ENCODE measurements at regions of chr13 and their contacts with region 1.

Region 1: DNA sequence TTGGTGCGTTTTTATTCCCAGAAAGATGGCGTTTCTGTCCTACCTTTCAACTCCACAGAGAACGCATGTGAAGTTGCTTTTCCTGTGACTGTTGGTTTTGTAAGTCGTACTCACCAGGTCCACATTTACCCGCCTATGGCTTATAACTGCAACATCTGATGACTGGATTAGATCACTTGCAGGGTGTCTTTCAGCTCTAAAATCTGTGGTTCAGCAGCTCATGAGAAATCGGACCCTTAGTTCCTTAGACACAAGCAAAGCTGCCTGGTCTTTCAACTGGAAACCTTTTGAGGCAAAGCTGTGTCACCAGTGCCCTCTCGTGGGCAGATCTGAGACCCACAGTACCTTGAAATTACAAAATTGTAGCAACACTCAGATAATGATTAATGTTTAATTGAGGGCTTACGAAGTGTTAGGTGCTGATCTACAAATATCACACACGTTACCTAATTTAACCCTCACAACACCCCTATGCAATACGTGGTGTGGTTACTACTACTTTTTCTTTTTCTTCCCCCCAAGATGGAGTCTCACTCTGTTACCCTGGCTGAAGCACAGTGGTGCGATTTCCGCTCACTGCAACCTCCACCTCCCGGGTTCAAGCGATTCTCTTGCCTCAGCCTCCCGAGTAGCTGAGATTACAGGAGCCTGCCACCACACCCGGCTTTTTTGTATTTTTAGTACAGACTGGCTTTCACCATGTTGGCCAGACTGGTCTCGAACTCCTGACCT is 65.4 kb downstream of the RUBCNL start:
- DNase-seq: peak; percentile 55 to 88 (median 76)
- ATAC-seq: peak; percentile 89
- H3K4me3 ChIP-seq: peak overlapping the region; percentile 6 to 35
- H3K4me3 Mint-ChIP-seq: peak overlapping the region; percentile 73
- H3K27ac ChIP-seq: peak overlapping the region; percentile 46 to 66
- H3K27ac Mint-ChIP-seq: peak overlapping the region; percentile 93
- H3K4me1 ChIP-seq: peaks cover 14% of the 10 kb centered on the region
- H3K4me1 Mint-ChIP-seq: peaks cover 44% of the 10 kb centered on the region
- H3K27me3 ChIP-seq: no peaks in the 10 kb centered on the region
- H3K27me3 Mint-ChIP-seq: no peaks in the 10 kb centered on the region
- CTCF ChIP-seq: peak; percentile 92

Region 2: GRCh38 chr13:45851171-45851921 is 470.3 kb before region 1 on chr13 and contains the start of gene SIAH3:
- CTCF ChIA-PET with region 1: interaction called, 3 read pairs
- POLR2A ChIA-PET with region 1: no interaction called
- intact Hi-C with region 1: loop called in 1 of 2 experiments (anchors 2 kb)
- DNase-seq: peak in 6 of 9 experiments; percentile 12 to 58 (median 26)
- ATAC-seq: peak; percentile 19
- H3K4me3 ChIP-seq: peak within 1 kb of the TSS; percentile 40 to 72
- H3K4me3 Mint-ChIP-seq: peak within 1 kb of the TSS; percentile 89
- H3K27ac ChIP-seq: peak within 1 kb of the TSS in 1 of 2 experiments; percentile 1
- H3K27ac Mint-ChIP-seq: peak within 1 kb of the TSS; percentile 84
- H3K4me1 ChIP-seq: peaks cover 51% of the 10 kb centered on the region
- H3K4me1 Mint-ChIP-seq: peaks cover 56% of the 10 kb centered on the region
- H3K27me3 ChIP-seq: peaks cover 0 to 2% of the 10 kb centered on the region in 2 experiments
- H3K27me3 Mint-ChIP-seq: no peaks in the 10 kb centered on the region
- CTCF ChIP-seq: no peak
- total RNA-seq, gene SIAH3: 0.49 to 0.61 TPM

Region 3: GRCh38 chr13:46146899-46147298 is 174.8 kb before region 1 on chr13:
- CTCF ChIA-PET with region 1: interaction called, 10 read pairs
- POLR2A ChIA-PET with region 1: no interaction called
- intact Hi-C with region 1: no loop called
- DNase-seq: no peak
- ATAC-seq: no peak
- H3K4me3 ChIP-seq: no peak overlapping the region
- H3K4me3 Mint-ChIP-seq: no peak overlapping the region
- H3K27ac ChIP-seq: no peak overlapping the region
- H3K27ac Mint-ChIP-seq: no peak overlapping the region
- H3K4me1 ChIP-seq: peaks cover 7% of the 10 kb centered on the region
- H3K4me1 Mint-ChIP-seq: peaks cover 29% of the 10 kb centered on the region
- H3K27me3 ChIP-seq: no peaks in the 10 kb centered on the region
- H3K27me3 Mint-ChIP-seq: no peaks in the 10 kb centered on the region
- CTCF ChIP-seq: no peak

Region 4: GRCh38 chr13:46184277-46184699 is 137.4 kb before region 1 on chr13:
- CTCF ChIA-PET with region 1: interaction called, 15 read pairs
- POLR2A ChIA-PET with region 1: no interaction called
- intact Hi-C with region 1: loop called in 1 of 2 experiments (anchors 1 kb)
- DNase-seq: peak; percentile 57 to 89 (median 77)
- ATAC-seq: peak; percentile 57
- H3K4me3 ChIP-seq: peak overlapping the region; percentile 31 to 32
- H3K4me3 Mint-ChIP-seq: peak overlapping the region; percentile 96
- H3K27ac ChIP-seq: peak overlapping the region; percentile 23 to 94
- H3K27ac Mint-ChIP-seq: peak overlapping the region; percentile 95
- H3K4me1 ChIP-seq: peaks cover 30% of the 10 kb centered on the region
- H3K4me1 Mint-ChIP-seq: peaks cover 37% of the 10 kb centered on the region
- H3K27me3 ChIP-seq: no peaks in the 10 kb centered on the region
- H3K27me3 Mint-ChIP-seq: no peaks in the 10 kb centered on the region
- CTCF ChIP-seq: peak; percentile 74

Region 5: GRCh38 chr13:46288570-46289259 is 32.9 kb before region 1 on chr13:
- CTCF ChIA-PET with region 1: interaction called, 97 read pairs
- POLR2A ChIA-PET with region 1: no interaction called
- intact Hi-C with region 1: loop called in 1 of 2 experiments (anchors 2 kb)
- DNase-seq: peak in 2 of 9 experiments; percentile 70 to 79
- ATAC-seq: peak; percentile 96
- H3K4me3 ChIP-seq: no peak overlapping the region
- H3K4me3 Mint-ChIP-seq: no peak overlapping the region
- H3K27ac ChIP-seq: no peak overlapping the region
- H3K27ac Mint-ChIP-seq: no peak overlapping the region
- H3K4me1 ChIP-seq: peaks cover 7% of the 10 kb centered on the region
- H3K4me1 Mint-ChIP-seq: peaks cover 19% of the 10 kb centered on the region
- H3K27me3 ChIP-seq: no peaks in the 10 kb centered on the region
- H3K27me3 Mint-ChIP-seq: no peaks in the 10 kb centered on the region
- CTCF ChIP-seq: peak; percentile 89

Region 6: GRCh38 chr13:48144413-48145035 is 1822.9 kb after region 1 on chr13:
- CTCF ChIA-PET with region 1: no interaction called
- POLR2A ChIA-PET with region 1: no interaction called
- intact Hi-C with region 1: no loop called
- DNase-seq: peak in 3 of 9 experiments; percentile 29 to 66 (median 44)
- ATAC-seq: peak; percentile 80
- H3K4me3 ChIP-seq: no peak overlapping the region
- H3K4me3 Mint-ChIP-seq: peak overlapping the region; percentile 39
- H3K27ac ChIP-seq: peak overlapping the region; percentile 48 to 57
- H3K27ac Mint-ChIP-seq: peak overlapping the region; percentile 92
- H3K4me1 ChIP-seq: peaks cover 27% of the 10 kb centered on the region
- H3K4me1 Mint-ChIP-seq: peaks cover 36% of the 10 kb centered on the region
- H3K27me3 ChIP-seq: no peaks in the 10 kb centered on the region
- H3K27me3 Mint-ChIP-seq: no peaks in the 10 kb centered on the region
- CTCF ChIP-seq: no peak

Measured in CD8-positive, alpha-beta T cell (primary cell).